GM18951 (cell line): ENCODE measurements at regions of chr3 and their contacts with region 1.

Region 1: DNA sequence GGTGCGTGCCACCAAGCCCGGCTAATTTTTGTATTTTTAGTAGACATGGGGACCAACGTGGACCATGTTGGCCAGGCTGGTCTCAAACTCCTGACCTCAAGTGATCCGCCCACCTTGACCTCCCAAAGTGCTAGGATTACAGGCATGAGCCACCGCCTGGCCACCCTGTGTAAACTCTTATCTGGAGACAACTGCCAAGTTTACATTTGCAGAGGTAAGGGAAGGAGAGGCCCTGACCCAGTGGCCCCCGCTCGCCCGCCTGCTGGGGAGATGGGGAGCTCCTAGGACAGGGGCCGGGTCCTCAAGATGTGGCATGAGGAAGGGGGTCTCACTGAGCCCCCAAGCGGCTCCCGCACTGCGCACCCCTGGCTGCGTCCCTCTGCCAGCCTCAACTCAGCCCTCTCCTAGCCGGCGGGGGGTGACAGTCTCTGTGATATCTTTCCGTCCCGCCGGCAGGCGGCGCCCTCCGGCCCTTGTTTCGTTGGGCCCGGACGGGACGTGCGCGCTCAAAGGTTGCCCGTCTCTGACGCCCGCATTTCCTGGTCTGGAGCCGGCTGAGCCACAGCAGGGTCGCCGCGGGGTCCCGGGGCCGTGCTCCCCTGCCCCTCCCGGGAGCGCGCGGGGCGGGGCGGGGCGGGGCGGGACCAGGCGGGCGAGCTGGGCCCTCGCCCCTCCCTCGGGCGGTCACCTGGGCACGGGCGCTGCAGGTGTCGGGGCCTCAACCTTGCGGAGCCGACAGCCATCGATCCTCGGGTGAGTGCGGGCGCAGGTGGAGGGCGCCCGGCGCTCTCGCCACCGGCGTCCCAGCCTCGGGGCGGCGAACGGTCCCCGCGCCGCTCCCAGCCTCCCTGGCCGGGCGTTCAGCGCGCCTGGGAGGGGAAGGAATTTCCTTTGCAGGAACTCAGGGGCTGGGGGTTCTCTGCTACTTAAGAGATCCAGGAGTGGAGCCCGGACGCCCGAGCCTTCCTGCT is at the start of gene GPR160:
- POLR2A ChIP-seq: peak; percentile 20

Region 2: GRCh38 chr3:169295126-169295525 is 742.6 kb before region 1 on chr3:
- in situ Hi-C with region 1: no loop called
- POLR2A ChIP-seq: no peak

Region 3: DNA sequence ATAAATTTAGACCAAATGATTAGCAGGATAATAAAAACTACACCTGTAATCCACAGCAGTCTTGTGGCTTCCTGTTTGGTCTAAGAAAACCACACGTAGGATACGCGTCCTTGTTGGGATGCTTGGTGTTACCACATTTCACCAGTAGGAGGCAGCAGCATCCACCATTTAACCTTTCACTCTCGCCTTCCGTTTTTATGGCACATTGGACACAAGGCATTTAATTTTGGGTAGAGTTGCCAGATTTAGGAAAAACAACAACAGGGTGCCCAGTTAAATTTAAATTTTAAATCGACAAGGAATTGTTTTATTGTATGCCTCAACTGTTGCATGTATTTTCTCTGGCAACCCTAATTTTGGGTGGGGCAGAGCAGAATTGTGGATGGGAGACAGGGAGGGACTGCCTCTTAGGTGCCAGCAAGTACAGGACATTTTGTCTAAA is 174.3 kb before region 1 on chr3:
- in situ Hi-C with region 1: loop called (anchors 25 kb)
- POLR2A ChIP-seq: no peak

Region 4: GRCh38 chr3:169879845-169880575 is 157.7 kb before region 1 on chr3:
- in situ Hi-C with region 1: no loop called
- POLR2A ChIP-seq: no peak